Heart left ventricle (tissue), 16 donors: ENCODE measurements at regions of chr12 and their contacts with region 1.

Region 1: DNA sequence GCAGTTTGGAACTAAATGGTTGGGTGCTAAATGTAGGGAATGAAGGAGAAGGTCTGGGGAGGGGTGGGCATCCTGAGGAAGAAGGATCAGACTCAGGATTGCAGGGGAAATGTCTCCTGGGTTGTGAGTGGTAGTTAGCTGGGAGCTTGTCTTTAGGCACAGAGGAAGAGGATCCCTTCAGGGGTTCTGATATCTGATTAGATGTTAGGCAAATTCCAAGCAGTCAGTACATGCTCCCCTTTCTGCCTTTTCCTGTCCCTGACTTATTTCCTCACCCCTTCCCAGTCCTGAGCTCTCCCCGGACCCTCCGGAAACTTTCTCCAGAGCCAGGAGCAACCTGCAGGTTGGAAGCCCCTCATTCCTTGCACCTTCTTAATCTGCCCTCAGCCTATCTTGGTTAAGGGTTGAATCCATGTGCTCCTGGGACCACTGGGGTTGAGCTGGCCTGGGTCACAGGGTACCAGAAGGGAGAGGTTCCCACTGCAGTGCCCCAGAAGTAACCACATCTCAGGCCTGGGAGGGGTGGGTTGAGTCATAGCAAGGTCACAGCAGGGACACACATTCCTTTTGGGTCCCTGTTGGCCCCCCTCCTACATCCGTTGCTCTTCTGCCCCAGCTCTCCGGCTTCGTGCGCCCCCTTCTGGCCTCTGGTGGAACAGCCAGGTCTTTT is 1.6 kb downstream of the IGFBP6 start:
- DNase-seq: peak; percentile 90 to 94 (median 93)
- ATAC-seq: peak; percentile 71 to 85 (median 82)
- H3K4me3 ChIP-seq: peak overlapping the region in 8 of 12 donors; percentile 57 to 73 (median 67)
- H3K27ac ChIP-seq: peak overlapping the region; percentile 79 to 96 (median 86)
- H3K4me1 ChIP-seq: peaks cover 3 to 63% (median 34%) of the 10 kb centered on the region in 12 donors
- H3K27me3 ChIP-seq: no peaks in the 10 kb centered on the region
- CTCF ChIP-seq: peak; percentile 91 to 100 (median 98)
- POLR2A ChIP-seq: peak in 1 of 2 donors; percentile 35

Region 2: GRCh38 chr12:53039851-53040250 is 59.3 kb before region 1 on chr12:
- intact Hi-C with region 1: loop called in 2 of 10 experiments (anchors 2 to 5 kb)
- DNase-seq: no peak
- ATAC-seq: no peak
- H3K4me3 ChIP-seq: no peak overlapping the region
- H3K27ac ChIP-seq: peak overlapping the region in 2 of 12 donors; percentile 65
- H3K4me1 ChIP-seq: peaks cover 0 to 40% (median 30%) of the 10 kb centered on the region in 12 donors
- H3K27me3 ChIP-seq: no peaks in the 10 kb centered on the region
- CTCF ChIP-seq: no peak
- POLR2A ChIP-seq: no peak

Region 3: DNA sequence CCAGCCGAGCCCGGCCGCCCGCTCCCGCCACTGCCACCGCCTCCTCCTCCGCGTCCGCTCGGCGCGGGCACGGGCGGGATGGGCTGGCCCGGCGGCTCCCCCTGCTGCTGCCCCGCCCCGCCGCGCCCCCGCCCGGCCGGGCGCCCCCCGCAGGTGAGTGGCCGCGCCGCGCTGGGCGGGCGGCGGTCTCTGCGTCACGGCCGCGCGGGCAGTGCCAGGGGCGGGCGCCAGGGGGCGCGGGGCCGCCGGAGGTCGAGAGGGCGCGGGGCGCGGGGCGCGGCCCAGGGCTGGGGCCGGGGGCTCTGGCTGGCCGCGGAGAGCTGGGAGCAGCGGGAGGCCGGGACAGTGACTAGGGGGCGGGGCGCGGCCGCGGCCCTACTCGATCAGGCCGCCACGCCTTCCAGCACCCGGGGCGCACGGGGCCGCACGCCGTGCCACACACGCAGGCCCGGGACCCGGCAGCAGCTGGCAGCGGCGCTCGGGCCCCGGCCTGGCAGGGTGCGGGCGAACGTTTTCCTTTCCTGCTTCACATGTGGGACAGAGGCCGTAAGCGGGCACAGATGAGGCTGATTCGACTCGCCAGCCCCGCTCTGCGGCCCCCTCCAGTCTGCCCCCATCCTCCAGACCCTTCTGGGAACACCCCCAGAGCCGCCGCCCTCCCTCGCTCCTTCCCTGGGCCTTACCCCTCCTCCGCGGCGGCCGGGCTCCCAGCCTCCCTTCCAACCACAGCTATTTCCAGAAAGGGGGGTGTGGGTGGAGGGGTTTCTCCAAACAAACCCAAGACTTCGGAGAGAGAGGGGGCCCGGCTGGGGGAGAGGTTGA is 51.7 kb before region 1 on chr12:
- intact Hi-C with region 1: loop called in 2 of 10 experiments (anchors 5 kb)
- DNase-seq: peak; percentile 84 to 89 (median 86)
- ATAC-seq: peak in 3 of 4 donors; percentile 7 to 20 (median 16)
- H3K4me3 ChIP-seq: peak overlapping the region; percentile 38 to 84 (median 78)
- H3K27ac ChIP-seq: peak overlapping the region; percentile 96 to 100 (median 99)
- H3K4me1 ChIP-seq: peaks cover 7 to 88% (median 68%) of the 10 kb centered on the region in 12 donors
- H3K27me3 ChIP-seq: no peaks in the 10 kb centered on the region
- CTCF ChIP-seq: peak in 5 of 12 donors; percentile 7 to 45 (median 29)
- POLR2A ChIP-seq: peak; percentile 59 to 76

Region 4: GRCh38 chr12:53054112-53054833 is 44.8 kb before region 1 on chr12:
- intact Hi-C with region 1: loop called in 2 of 10 experiments (anchors 5 kb)
- DNase-seq: peak; percentile 92 to 95 (median 95)
- ATAC-seq: peak; percentile 45 to 70 (median 70)
- H3K4me3 ChIP-seq: peak overlapping the region; percentile 5 to 81 (median 72)
- H3K27ac ChIP-seq: peak overlapping the region; percentile 14 to 100 (median 98)
- H3K4me1 ChIP-seq: peaks cover 7 to 84% (median 51%) of the 10 kb centered on the region in 12 donors
- H3K27me3 ChIP-seq: no peaks in the 10 kb centered on the region
- CTCF ChIP-seq: no peak
- POLR2A ChIP-seq: no peak

Region 5: GRCh38 chr12:53065975-53066931 is 32.9 kb before region 1 on chr12:
- intact Hi-C with region 1: loop called (anchors 1 to 2 kb)
- DNase-seq: peak; percentile 78 to 87 (median 83)
- ATAC-seq: peak; percentile 40 to 71 (median 50)
- H3K4me3 ChIP-seq: peak overlapping the region in 1 of 12 donors; percentile 10
- H3K27ac ChIP-seq: peak overlapping the region in 11 of 12 donors; percentile 39 to 86 (median 71)
- H3K4me1 ChIP-seq: peaks cover 5 to 97% (median 75%) of the 10 kb centered on the region in 12 donors
- H3K27me3 ChIP-seq: no peaks in the 10 kb centered on the region
- CTCF ChIP-seq: peak; percentile 86 to 95 (median 91)
- POLR2A ChIP-seq: no peak

Region 6: GRCh38 chr12:53071591-53072551 is 27.2 kb before region 1 on chr12:
- intact Hi-C with region 1: loop called in 5 of 10 experiments (anchors 2 kb)
- DNase-seq: peak in 4 of 5 donors; percentile 75 to 87 (median 84)
- ATAC-seq: peak; percentile 35 to 77 (median 68)
- H3K4me3 ChIP-seq: peak overlapping the region in 6 of 12 donors; percentile 2 to 18 (median 10)
- H3K27ac ChIP-seq: peak overlapping the region; percentile 42 to 89 (median 80)
- H3K4me1 ChIP-seq: peaks cover 23 to 78% (median 60%) of the 10 kb centered on the region in 12 donors
- H3K27me3 ChIP-seq: no peaks in the 10 kb centered on the region
- CTCF ChIP-seq: peak in 6 of 12 donors; percentile 17 to 48 (median 28)
- POLR2A ChIP-seq: no peak

Region 7: GRCh38 chr12:53079226-53080117 is 19.6 kb before region 1 on chr12 and contains the start of gene SPRYD3:
- intact Hi-C with region 1: loop called in 3 of 10 experiments (anchors 2 kb)
- DNase-seq: peak; percentile 96 to 99 (median 97)
- ATAC-seq: peak; percentile 99 to 100 (median 99)
- H3K4me3 ChIP-seq: peak within 1 kb of the TSS; percentile 48 to 84 (median 72)
- H3K27ac ChIP-seq: peak within 1 kb of the TSS; percentile 84 to 100 (median 96)
- H3K4me1 ChIP-seq: peaks cover 0 to 32% (median 19%) of the 10 kb centered on the region in 12 donors
- H3K27me3 ChIP-seq: no peaks in the 10 kb centered on the region
- CTCF ChIP-seq: no peak
- POLR2A ChIP-seq: peak; percentile 22 to 97
- total RNA-seq, gene SPRYD3: 42.9 to 72.6 (median 48.5) TPM